Activated T-helper 2 cell treated with anti-CD3 and anti-CD28 coated beads, Interferon-gamma antibody, Interleukin-2, Interleukin-4, amounts not matched to agents 10 μg/mL and 5 μg/mL and 100 μg/mL, durations not matched to agents 14 hours and 24 hours and 36 hours (primary cell): ENCODE measurements at regions of chr6 and their contacts with region 1.

Region 1: DNA sequence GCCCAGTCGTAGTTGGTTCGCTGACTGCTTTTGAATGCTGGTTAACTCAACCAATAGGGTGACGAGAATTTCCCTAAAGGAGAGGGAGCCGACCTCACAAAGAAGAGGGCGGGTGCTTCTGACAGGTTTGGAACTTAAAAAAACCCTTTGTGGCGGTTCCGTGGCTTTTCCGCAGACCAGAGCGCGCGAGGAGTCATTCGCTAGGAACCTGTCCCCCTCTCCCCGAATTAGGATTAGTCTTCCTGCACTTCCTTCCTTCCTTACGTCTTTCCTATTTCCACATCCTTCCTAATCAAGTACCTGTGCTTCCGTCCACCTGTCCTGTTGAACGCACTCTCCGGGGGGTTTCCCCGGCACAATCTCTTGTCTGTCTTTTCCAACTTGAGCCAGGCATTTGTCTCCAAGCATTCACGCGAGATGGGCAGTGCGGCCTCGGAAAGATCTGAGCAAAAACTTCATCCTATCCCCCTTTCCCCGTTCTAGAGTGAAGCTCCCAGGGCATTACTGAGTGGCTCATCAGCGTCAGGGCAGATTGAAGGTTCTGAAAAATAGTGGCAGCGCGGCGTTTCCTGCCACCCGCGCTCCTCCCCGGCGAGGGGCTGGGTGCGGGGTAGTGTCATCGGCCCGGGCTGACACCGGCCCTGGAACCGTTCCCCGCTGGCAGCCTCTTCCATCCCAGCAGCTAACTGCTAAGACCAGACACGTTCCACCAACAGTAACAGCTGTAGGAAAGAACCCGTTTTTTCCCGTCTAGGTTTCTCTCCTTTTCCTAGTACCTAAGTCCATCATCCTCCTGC is 1.5 kb upstream of the STXBP5 start:
- DNase-seq: peak; percentile 79
- H3K4me3 Mint-ChIP-seq: peak overlapping the region; percentile 93
- H3K27ac Mint-ChIP-seq: peak overlapping the region; percentile 99
- H3K4me1 Mint-ChIP-seq: peaks cover 29% of the 10 kb centered on the region
- H3K27me3 Mint-ChIP-seq: no peaks in the 10 kb centered on the region

Region 2: DNA sequence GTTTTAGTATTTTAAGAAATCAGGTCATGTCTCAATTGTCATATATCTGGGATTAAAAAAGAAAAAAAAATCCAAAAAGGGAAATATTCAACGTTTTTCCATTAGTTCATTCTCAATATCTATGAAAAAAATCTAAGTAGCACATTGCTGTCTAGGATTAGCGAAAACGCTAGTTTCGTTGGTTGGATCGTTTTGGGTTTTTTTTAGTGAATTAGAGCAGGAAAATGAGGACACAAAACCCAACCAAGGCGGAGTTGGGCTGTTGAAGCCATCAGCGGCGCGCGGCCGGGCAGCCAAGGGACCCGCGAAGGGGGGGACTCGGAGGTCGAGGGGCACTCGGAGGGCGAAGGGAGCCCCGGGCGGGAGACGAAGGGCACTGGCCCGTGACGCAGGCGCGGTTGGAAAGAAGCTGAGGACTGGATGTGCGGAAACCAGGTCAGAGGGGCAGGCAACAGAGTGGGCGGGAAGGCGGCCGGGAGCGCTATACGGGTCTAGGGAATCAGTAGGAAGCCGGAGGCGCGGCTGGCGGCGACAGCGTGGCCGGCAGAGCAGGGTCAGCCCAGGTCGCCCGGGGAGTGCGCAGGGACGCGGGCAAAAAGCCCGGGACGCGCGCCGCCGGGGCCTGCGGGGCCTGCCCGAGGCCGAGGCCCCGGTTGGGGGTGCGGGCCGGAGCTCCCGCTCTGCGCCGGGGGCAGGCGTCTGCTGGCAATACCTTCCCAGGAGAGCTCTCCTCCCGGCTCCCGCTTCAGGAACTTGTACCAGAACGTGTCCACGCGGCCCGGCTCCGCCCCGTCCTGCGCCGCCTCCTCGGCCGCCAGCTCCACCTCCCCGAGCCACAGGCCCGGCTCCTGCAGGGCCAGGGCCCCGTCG is 1468.0 kb before region 1 on chr6:
- intact Hi-C with region 1: loop called (anchors 10 kb)
- DNase-seq: peak; percentile 67
- H3K4me3 Mint-ChIP-seq: peak overlapping the region; percentile 93
- H3K27ac Mint-ChIP-seq: peak overlapping the region; percentile 98
- H3K4me1 Mint-ChIP-seq: peaks cover 26% of the 10 kb centered on the region
- H3K27me3 Mint-ChIP-seq: no peaks in the 10 kb centered on the region

Region 3: GRCh38 chr6:146785001-146785585 is 417.6 kb before region 1 on chr6:
- intact Hi-C with region 1: loop called (anchors 10 kb)
- DNase-seq: peak; percentile 20
- H3K4me3 Mint-ChIP-seq: no peak overlapping the region
- H3K27ac Mint-ChIP-seq: no peak overlapping the region
- H3K4me1 Mint-ChIP-seq: peaks cover 13% of the 10 kb centered on the region
- H3K27me3 Mint-ChIP-seq: no peaks in the 10 kb centered on the region

Region 4: DNA sequence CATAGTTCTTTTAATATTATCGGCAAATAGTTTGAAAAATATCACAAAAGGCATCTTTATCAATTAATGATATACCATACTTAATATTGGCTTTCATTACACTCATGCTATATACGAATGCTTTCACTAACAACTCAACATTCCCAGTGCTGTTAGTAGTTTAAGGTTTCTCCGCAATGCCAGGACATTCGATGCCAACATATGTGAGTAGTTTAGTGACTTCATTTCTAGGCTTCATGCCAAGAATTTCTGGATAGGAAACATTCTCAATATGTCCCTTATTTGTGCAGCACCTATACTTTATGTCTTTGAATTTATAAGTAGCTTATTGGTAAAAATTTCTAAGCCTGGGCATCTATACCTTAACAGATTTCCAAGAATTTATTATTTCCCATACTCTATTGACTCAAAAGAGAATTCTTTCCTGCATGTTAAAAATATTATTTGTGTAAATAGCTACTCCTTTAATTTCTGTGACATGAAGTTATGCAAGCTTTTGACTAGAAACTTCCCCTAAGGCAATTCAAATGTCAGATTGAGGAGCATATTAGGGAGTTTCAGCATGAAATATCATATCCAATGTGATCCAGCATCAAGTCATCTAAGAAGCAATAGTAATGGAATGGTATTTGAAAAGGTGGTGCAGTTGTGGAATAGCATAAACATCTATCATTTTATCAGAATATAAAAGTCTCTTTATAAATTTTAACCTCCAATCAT is 234.5 kb before region 1 on chr6:
- intact Hi-C with region 1: no loop called
- DNase-seq: no peak
- H3K4me3 Mint-ChIP-seq: no peak overlapping the region
- H3K27ac Mint-ChIP-seq: no peak overlapping the region
- H3K4me1 Mint-ChIP-seq: no peaks in the 10 kb centered on the region
- H3K27me3 Mint-ChIP-seq: no peaks in the 10 kb centered on the region

Region 5: GRCh38 chr6:147131532-147132128 is 71.1 kb before region 1 on chr6:
- intact Hi-C with region 1: no loop called
- DNase-seq: no peak
- H3K4me3 Mint-ChIP-seq: no peak overlapping the region
- H3K27ac Mint-ChIP-seq: no peak overlapping the region
- H3K4me1 Mint-ChIP-seq: peaks cover 14% of the 10 kb centered on the region
- H3K27me3 Mint-ChIP-seq: no peaks in the 10 kb centered on the region

Region 6: GRCh38 chr6:147322299-147323162 is 119.8 kb after region 1 on chr6:
- intact Hi-C with region 1: loop called (anchors 2 kb)
- DNase-seq: peak; percentile 11
- H3K4me3 Mint-ChIP-seq: peak overlapping the region; percentile 55
- H3K27ac Mint-ChIP-seq: peak overlapping the region; percentile 79
- H3K4me1 Mint-ChIP-seq: peaks cover 18% of the 10 kb centered on the region
- H3K27me3 Mint-ChIP-seq: no peaks in the 10 kb centered on the region